ENCODE measurements at regions of chr16 and their contacts with region 1.

Region 1: GRCh38 chr16:89217388-89218191 is at the start of gene ZNF778:
- DNase-seq: peak; percentile 77 to 86 (median 84)
- ATAC-seq: peak; percentile 88
- H3K4me3 ChIP-seq: peak within 1 kb of the TSS; percentile 56
- H3K4me3 Mint-ChIP-seq: peak within 1 kb of the TSS; percentile 68 to 96 (median 92)
- H3K27ac ChIP-seq: peak within 1 kb of the TSS; percentile 99
- H3K27ac Mint-ChIP-seq: peak within 1 kb of the TSS; percentile 68 to 99 (median 86)
- H3K4me1 ChIP-seq: peaks cover 5 to 10% of the 10 kb centered on the region in 2 donors
- H3K4me1 Mint-ChIP-seq: peaks cover 12 to 39% (median 29%) of the 10 kb centered on the region in 7 donors
- H3K27me3 ChIP-seq: no peaks in the 10 kb centered on the region
- H3K27me3 Mint-ChIP-seq: no peaks in the 10 kb centered on the region
- total RNA-seq, gene ZNF778: 6.0 to 13.5 (median 6.5) TPM

Region 2: GRCh38 chr16:88706288-88706964 is 511.2 kb before region 1 on chr16 and contains the starts of genes CTU2 and RNF166:
- CTCF ChIA-PET with region 1: interaction called, 3 read pairs
- POLR2A ChIA-PET with region 1: no interaction called
- intact Hi-C with region 1: loop called (anchors 1 kb)
- DNase-seq: peak; percentile 86 to 98 (median 92)
- ATAC-seq: peak; percentile 84
- H3K4me3 ChIP-seq: peak within 1 kb of the TSS; percentile 79
- H3K4me3 Mint-ChIP-seq: peak within 1 kb of the TSS; percentile 78 to 98 (median 94)
- H3K27ac ChIP-seq: peak within 1 kb of the TSS; percentile 88
- H3K27ac Mint-ChIP-seq: peak within 1 kb of the TSS; percentile 85 to 98 (median 97)
- H3K4me1 ChIP-seq: peaks cover 25 to 40% of the 10 kb centered on the region in 2 donors
- H3K4me1 Mint-ChIP-seq: peaks cover 31 to 45% (median 41%) of the 10 kb centered on the region in 7 donors
- H3K27me3 ChIP-seq: no peaks in the 10 kb centered on the region
- H3K27me3 Mint-ChIP-seq: no peaks in the 10 kb centered on the region
- total RNA-seq, gene CTU2: 26.0 to 43.3 (median 28.3) TPM
- total RNA-seq, gene RNF166: 99.8 to 324 (median 133) TPM

Region 3: GRCh38 chr16:88811769-88812512 is 405.6 kb before region 1 on chr16 and contains the start of gene APRT:
- CTCF ChIA-PET with region 1: no interaction called
- POLR2A ChIA-PET with region 1: interaction called, 5 read pairs
- intact Hi-C with region 1: loop called (anchors 1 kb)
- DNase-seq: peak; percentile 92 to 100 (median 98)
- ATAC-seq: peak; percentile 95
- H3K4me3 ChIP-seq: peak within 1 kb of the TSS; percentile 97
- H3K4me3 Mint-ChIP-seq: peak within 1 kb of the TSS; percentile 92 to 99 (median 96)
- H3K27ac ChIP-seq: peak within 1 kb of the TSS; percentile 84
- H3K27ac Mint-ChIP-seq: peak within 1 kb of the TSS; percentile 79 to 98 (median 95)
- H3K4me1 ChIP-seq: peaks cover 8 to 11% of the 10 kb centered on the region in 2 donors
- H3K4me1 Mint-ChIP-seq: peaks cover 0 to 26% (median 12%) of the 10 kb centered on the region in 7 donors
- H3K27me3 ChIP-seq: no peaks in the 10 kb centered on the region
- H3K27me3 Mint-ChIP-seq: no peaks in the 10 kb centered on the region
- total RNA-seq, gene APRT: 134 to 178 (median 161) TPM

Region 4: GRCh38 chr16:89115216-89115861 is 102.3 kb before region 1 on chr16:
- CTCF ChIA-PET with region 1: interaction called, 12 read pairs
- POLR2A ChIA-PET with region 1: interaction called, 3 read pairs
- intact Hi-C with region 1: loop called (anchors 1 kb)
- DNase-seq: peak; percentile 73 to 98 (median 96)
- ATAC-seq: peak; percentile 95
- H3K4me3 ChIP-seq: peak overlapping the region; percentile 59
- H3K4me3 Mint-ChIP-seq: peak overlapping the region; percentile 81 to 92 (median 87)
- H3K27ac ChIP-seq: peak overlapping the region; percentile 89
- H3K27ac Mint-ChIP-seq: peak overlapping the region in 6 of 9 donors; percentile 95 to 100 (median 96)
- H3K4me1 ChIP-seq: peaks cover 30 to 52% of the 10 kb centered on the region in 2 donors
- H3K4me1 Mint-ChIP-seq: peaks cover 30 to 66% (median 50%) of the 10 kb centered on the region in 7 donors
- H3K27me3 ChIP-seq: no peaks in the 10 kb centered on the region
- H3K27me3 Mint-ChIP-seq: no peaks in the 10 kb centered on the region

Region 5: DNA sequence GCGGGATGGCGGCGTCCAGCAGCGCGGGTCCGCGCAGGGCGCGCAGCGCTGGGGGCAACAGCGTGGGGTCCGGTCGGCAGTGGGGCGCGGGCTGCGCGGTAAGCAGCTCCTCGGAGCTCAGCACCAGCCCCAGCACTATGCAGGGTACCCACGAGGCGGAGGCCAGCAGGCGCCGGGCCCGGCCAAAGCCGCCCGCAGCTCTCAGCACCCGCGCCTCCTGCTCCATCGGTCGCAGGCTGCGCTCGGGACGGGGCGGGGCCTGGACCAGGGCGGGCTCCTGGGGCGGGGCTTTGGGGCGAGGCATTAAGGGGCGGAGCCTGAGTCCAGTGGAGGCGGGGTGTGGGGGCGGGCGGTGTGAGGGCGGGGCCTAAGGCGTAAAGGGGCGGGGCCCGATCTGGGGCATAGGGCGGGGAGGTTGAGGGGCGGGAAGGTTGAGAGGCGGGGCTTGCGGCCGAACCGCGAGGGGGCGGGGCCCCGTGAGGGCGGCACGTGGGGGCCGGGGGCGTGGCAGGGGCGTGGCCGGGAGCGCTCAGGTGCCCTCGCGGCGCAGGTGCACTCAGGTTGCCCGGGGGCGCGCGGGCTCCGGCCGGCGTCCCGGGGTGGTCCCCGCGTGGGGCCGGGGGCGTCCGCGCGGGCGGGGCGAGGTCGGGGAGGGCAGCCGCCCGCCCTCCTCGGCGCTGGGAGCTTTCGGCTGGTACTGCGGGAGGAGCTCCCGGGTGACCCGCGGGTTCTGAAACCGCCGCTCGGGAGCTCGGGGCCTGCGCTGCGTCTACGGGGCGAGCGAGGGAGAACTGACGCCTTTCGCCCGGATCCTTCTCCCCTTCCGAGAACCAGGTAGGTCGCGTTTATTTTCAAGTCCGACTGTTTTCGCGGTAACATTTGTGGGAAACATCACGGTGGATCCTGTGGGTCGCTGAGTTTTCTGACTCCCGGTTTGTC is 15.9 kb before region 1 on chr16:
- CTCF ChIA-PET with region 1: no interaction called
- POLR2A ChIA-PET with region 1: no interaction called
- intact Hi-C with region 1: loop called (anchors 1 kb)
- DNase-seq: peak; percentile 62 to 89 (median 76)
- ATAC-seq: peak; percentile 94
- H3K4me3 ChIP-seq: no peak overlapping the region
- H3K4me3 Mint-ChIP-seq: peak overlapping the region; percentile 12 to 82 (median 74)
- H3K27ac ChIP-seq: no peak overlapping the region
- H3K27ac Mint-ChIP-seq: no peak overlapping the region
- H3K4me1 ChIP-seq: peaks cover 0 to 9% of the 10 kb centered on the region in 2 donors
- H3K4me1 Mint-ChIP-seq: peaks cover 0 to 22% (median 9%) of the 10 kb centered on the region in 7 donors
- H3K27me3 ChIP-seq: peaks cover 0 to 4% of the 10 kb centered on the region in 2 donors
- H3K27me3 Mint-ChIP-seq: peaks cover 22 to 47% (median 41%) of the 10 kb centered on the region in 5 donors

Region 6: GRCh38 chr16:89350701-89351380 is 133.3 kb after region 1 on chr16:
- CTCF ChIA-PET with region 1: no interaction called
- POLR2A ChIA-PET with region 1: no interaction called
- intact Hi-C with region 1: no loop called
- DNase-seq: peak in 1 of 9 donors; percentile 45
- ATAC-seq: no peak
- H3K4me3 ChIP-seq: no peak overlapping the region
- H3K4me3 Mint-ChIP-seq: peak overlapping the region in 7 of 10 donors; percentile 0 to 67 (median 31)
- H3K27ac ChIP-seq: no peak overlapping the region
- H3K27ac Mint-ChIP-seq: peak overlapping the region in 7 of 9 donors; percentile 3 to 80 (median 57)
- H3K4me1 ChIP-seq: peaks cover 34 to 72% of the 10 kb centered on the region in 2 donors
- H3K4me1 Mint-ChIP-seq: peaks cover 70 to 99% (median 90%) of the 10 kb centered on the region in 7 donors
- H3K27me3 ChIP-seq: no peaks in the 10 kb centered on the region
- H3K27me3 Mint-ChIP-seq: no peaks in the 10 kb centered on the region

Region 7: GRCh38 chr16:89560378-89561141 is 343.0 kb after region 1 on chr16 and contains the start of gene RPL13:
- CTCF ChIA-PET with region 1: no interaction called
- POLR2A ChIA-PET with region 1: no interaction called
- intact Hi-C with region 1: loop called in 1 of 2 experiments (anchors 1 kb)
- DNase-seq: peak; percentile 79 to 95 (median 92)
- ATAC-seq: peak; percentile 96
- H3K4me3 ChIP-seq: peak within 1 kb of the TSS; percentile 97
- H3K4me3 Mint-ChIP-seq: peak within 1 kb of the TSS; percentile 85 to 99 (median 96)
- H3K27ac ChIP-seq: peak within 1 kb of the TSS; percentile 87
- H3K27ac Mint-ChIP-seq: peak within 1 kb of the TSS; percentile 92 to 99 (median 98)
- H3K4me1 ChIP-seq: peaks cover 24 to 42% of the 10 kb centered on the region in 2 donors
- H3K4me1 Mint-ChIP-seq: peaks cover 33 to 63% (median 55%) of the 10 kb centered on the region in 7 donors
- H3K27me3 ChIP-seq: no peaks in the 10 kb centered on the region
- H3K27me3 Mint-ChIP-seq: no peaks in the 10 kb centered on the region
- total RNA-seq, gene RPL13: 2,239 to 5,631 (median 5,332) TPM

Measured in naive thymus-derived CD4-positive, alpha-beta T cell (primary cell).